ENCODE measurements at regions of chr6 and their contacts with region 1.

Region 1: GRCh38 chr6:149233056-149233715 is 84.3 kb upstream of the TAB2 start:
- DNase-seq: peak; percentile 57
- H3K4me3 Mint-ChIP-seq: peak overlapping the region; percentile 37
- H3K27ac Mint-ChIP-seq: peak overlapping the region; percentile 98
- H3K4me1 Mint-ChIP-seq: peaks cover 34% of the 10 kb centered on the region
- H3K27me3 Mint-ChIP-seq: no peaks in the 10 kb centered on the region
- CTCF ChIP-seq: no peak

Region 2: DNA sequence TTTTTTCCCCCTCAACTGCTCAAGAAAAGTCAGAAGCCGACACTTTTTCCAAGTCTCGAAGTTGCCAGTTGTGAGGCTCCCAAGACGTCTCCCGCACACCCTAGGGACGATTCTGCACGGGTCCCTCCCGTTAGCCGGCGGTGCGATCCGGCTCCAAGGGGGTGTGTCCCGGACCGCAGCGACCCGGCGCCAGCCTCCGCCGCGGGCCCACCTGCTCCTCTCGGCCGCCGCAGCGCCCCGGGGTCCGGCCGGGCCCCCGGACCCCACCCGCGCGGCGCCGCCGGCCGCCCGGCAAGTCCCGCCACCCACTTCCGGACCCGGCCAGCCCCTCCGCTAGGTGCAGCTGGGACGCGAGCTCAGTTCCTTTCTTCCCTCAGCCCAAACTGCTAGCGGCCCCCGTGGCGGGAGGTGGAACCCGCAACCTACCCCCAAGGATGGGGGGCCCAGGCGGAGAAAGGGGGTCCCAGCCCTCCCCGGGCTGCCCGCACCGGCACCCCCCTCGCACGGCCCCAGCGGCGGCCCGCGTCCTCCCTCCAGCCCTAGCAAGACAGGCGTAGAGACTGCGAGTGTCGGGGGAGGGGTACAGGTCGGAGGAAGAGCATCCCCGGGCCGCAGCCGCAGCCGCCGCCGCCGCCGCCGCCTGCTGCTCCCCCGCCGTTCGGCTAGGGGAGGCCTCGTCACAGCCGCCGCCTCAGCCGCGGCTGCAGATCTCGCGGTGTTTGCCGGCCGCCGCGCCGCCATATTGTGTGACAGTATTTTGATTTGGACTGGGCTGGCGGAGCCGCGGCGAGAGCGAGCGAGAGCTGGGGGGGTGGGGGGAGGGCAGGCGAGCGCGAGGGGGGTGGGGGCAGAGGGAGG is 83.8 kb after region 1 on chr6:
- CTCF ChIA-PET with region 1: no interaction called
- intact Hi-C with region 1: loop called (anchors 5 kb)
- DNase-seq: peak; percentile 82
- H3K4me3 Mint-ChIP-seq: peak overlapping the region; percentile 83
- H3K27ac Mint-ChIP-seq: peak overlapping the region; percentile 42
- H3K4me1 Mint-ChIP-seq: peaks cover 10% of the 10 kb centered on the region
- H3K27me3 Mint-ChIP-seq: no peaks in the 10 kb centered on the region
- CTCF ChIP-seq: no peak